Dorsolateral prefrontal cortex (tissue), 120 donors: ENCODE measurements at regions of chr9 and their contacts with region 1.

Region 1: GRCh38 chr9:133103183-133103986 is 17.7 kb downstream of the RALGDS start:
- DNase-seq: peak; percentile 58 to 83 (median 76)
- H3K4me3 ChIP-seq: no peak overlapping the region
- H3K27ac ChIP-seq: peak overlapping the region in 58 of 59 donors; percentile 0 to 92 (median 78)
- H3K27me3 ChIP-seq: no peaks in the 10 kb centered on the region
- CTCF ChIP-seq: peak; percentile 88 to 100 (median 97)

Region 2: GRCh38 chr9:133035669-133036068 is 67.7 kb before region 1 on chr9:
- intact Hi-C with region 1: loop called in 1 of 2 experiments (anchors 5 kb)
- DNase-seq: no peak
- H3K4me3 ChIP-seq: no peak overlapping the region
- H3K27ac ChIP-seq: no peak overlapping the region
- H3K27me3 ChIP-seq: no peaks in the 10 kb centered on the region
- CTCF ChIP-seq: no peak

Region 3: DNA sequence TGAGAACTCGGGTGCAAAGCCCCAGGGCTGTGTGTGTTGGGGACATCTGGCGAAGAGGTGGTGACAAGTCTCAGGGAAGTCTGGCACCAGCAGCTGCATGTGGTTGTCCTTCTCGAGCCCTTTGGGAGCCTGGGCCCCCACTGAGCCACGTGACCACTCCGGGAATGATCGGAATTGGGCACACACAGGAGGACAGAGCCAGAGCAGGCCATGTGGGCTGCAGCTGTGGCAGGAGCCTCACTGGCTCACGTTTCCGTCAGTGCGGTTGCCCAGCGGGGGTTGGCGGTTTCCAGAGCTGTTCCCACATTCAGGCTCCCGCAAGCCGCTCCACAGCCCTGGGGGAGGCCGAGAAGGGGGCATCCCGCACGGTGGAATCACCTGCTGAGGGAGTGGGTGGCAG is 48.4 kb before region 1 on chr9:
- intact Hi-C with region 1: loop called (anchors 5 kb)
- DNase-seq: peak in 5 of 10 donors; percentile 46 to 77 (median 57)
- H3K4me3 ChIP-seq: no peak overlapping the region
- H3K27ac ChIP-seq: peak overlapping the region in 35 of 59 donors; percentile 4 to 76 (median 41)
- H3K27me3 ChIP-seq: no peaks in the 10 kb centered on the region
- CTCF ChIP-seq: no peak

Region 4: GRCh38 chr9:133144137-133144903 is 40.9 kb after region 1 on chr9:
- intact Hi-C with region 1: loop called (anchors 1 kb)
- DNase-seq: peak in 9 of 10 donors; percentile 58 to 89 (median 81)
- H3K4me3 ChIP-seq: peak overlapping the region; percentile 19 to 77 (median 60)
- H3K27ac ChIP-seq: peak overlapping the region; percentile 52 to 100 (median 100)
- H3K27me3 ChIP-seq: no peaks in the 10 kb centered on the region
- CTCF ChIP-seq: peak in 55 of 56 donors; percentile 92 to 100 (median 99)